ENCODE measurements at regions of chr14 and their contacts with region 1.

Region 1: GRCh38 chr14:34472706-34473279 is 10.8 kb upstream of the SPTSSA start:
- DNase-seq: no peak
- ATAC-seq: no peak
- H3K4me3 ChIP-seq: no peak overlapping the region
- H3K27ac ChIP-seq: no peak overlapping the region
- H3K4me1 ChIP-seq: no peaks in the 10 kb centered on the region; the same call in 1 of the 2 replicates
- H3K27me3 ChIP-seq: 0 out of 2 replicates have a peak, but pooled peaks cover 1% of the 10 kb centered on the region
- CTCF ChIP-seq: no peak
- POLR2A ChIP-seq: no peak
- RAD21 ChIP-seq: no peak

Region 2: GRCh38 chr14:32494609-32495434 is 1978.0 kb before region 1 on chr14:
- CTCF ChIA-PET with region 1: no interaction called
- POLR2A ChIA-PET with region 1: interaction called, 12 read pairs
- dilution Hi-C with region 1: no loop called
- in situ Hi-C with region 1: no loop called
- intact Hi-C with region 1: no loop called
- DNase-seq: peak; percentile 67
- ATAC-seq: peak; percentile 92
- H3K4me3 ChIP-seq: peak overlapping the region; percentile 3; the same call in 1 of the 2 replicates
- H3K27ac ChIP-seq: peak overlapping the region; percentile 45
- H3K4me1 ChIP-seq: peaks cover 12% of the 10 kb centered on the region
- H3K27me3 ChIP-seq: no peaks in the 10 kb centered on the region
- CTCF ChIP-seq: no peak
- POLR2A ChIP-seq: no peak
- RAD21 ChIP-seq: no peak

Measured in IMR-90 (cell line).